Panc1 (cell line): ENCODE measurements at regions of chr5 and their contacts with region 1.

Region 1: DNA sequence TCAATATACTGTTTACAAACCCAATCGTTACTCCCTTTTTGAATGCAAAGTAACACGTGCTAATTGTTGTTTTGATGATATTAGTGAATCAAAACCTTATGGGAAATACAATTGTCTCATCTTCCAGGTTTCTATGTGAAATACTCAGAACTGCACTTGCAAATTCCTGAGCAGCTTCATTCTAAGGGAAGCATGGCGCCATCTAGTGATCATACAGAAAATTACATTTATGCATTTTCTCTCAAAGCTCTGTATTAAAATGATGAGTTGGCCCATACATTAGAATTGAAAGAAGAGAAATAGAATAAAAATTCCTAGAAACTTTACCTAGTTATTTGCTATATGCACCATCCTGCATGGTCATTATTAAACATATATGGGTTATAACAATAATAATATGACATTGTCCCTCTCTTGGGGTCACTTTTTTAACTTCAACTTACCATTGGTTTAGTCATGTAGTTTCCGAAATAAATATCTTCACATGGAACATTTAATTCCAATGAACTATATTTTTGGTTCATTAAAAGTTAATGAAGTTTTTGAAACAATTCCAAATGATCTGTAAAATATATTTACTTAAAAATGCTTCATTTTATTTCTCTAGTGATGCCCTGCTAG is 220.0 kb downstream of the PDE4D start:
- DNase-seq: no peak
- ATAC-seq: no peak
- H3K4me3 ChIP-seq: no peak overlapping the region
- H3K27ac ChIP-seq: no peak overlapping the region
- H3K4me1 ChIP-seq: no peaks in the 10 kb centered on the region
- H3K27me3 ChIP-seq: no peaks in the 10 kb centered on the region
- CTCF ChIP-seq: peak; percentile 77; the same call in 1 of the 2 replicates

Region 2: GRCh38 chr5:58834242-58835225 is 839.0 kb before region 1 on chr5:
- CTCF ChIA-PET with region 1: no interaction called
- POLR2A ChIA-PET with region 1: no interaction called
- in situ Hi-C with region 1: no loop called
- intact Hi-C with region 1: no loop called
- DNase-seq: no peak
- ATAC-seq: no peak
- H3K4me3 ChIP-seq: no peak overlapping the region
- H3K27ac ChIP-seq: no peak overlapping the region
- H3K4me1 ChIP-seq: no peaks in the 10 kb centered on the region
- H3K27me3 ChIP-seq: no peaks in the 10 kb centered on the region
- CTCF ChIP-seq: no peak

Region 3: GRCh38 chr5:59188419-59189225 is 484.9 kb before region 1 on chr5:
- CTCF ChIA-PET with region 1: no interaction called
- POLR2A ChIA-PET with region 1: no interaction called
- in situ Hi-C with region 1: no loop called
- intact Hi-C with region 1: loop called (anchors 5 kb)
- DNase-seq: no peak
- ATAC-seq: peak; percentile 87
- H3K4me3 ChIP-seq: no peak overlapping the region
- H3K27ac ChIP-seq: no peak overlapping the region
- H3K4me1 ChIP-seq: no peaks in the 10 kb centered on the region; the same call in 1 of the 2 replicates
- H3K27me3 ChIP-seq: peaks cover 4% of the 10 kb centered on the region; the same call in 1 of the 2 replicates
- CTCF ChIP-seq: peak; percentile 79

Region 4: DNA sequence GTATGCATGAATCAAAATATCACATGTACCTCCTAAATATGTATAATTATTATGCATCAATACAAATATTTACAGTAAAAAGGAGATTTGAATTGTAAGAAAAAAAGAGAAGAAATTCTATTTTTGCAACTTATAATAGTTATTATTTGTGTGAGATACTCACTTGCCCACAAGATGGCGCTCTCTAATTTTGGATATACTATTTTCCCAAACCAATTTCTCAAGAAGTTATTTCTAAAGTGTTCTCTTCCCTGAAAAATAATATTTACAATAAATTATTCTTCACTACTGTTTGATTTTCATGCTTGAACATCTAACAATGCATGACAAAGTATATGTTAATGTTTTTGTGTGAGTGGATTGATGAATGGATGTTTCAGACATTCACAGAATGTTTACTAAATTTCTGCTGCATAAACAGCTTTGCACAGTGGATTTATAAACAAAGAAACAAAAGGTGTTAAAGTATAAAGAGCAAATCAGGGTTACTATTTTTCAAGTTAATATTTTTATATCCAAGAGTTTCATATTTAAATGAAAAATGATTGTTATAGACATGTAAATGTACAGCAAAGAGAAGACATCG is 283.4 kb before region 1 on chr5:
- CTCF ChIA-PET with region 1: no interaction called
- POLR2A ChIA-PET with region 1: no interaction called
- in situ Hi-C with region 1: no loop called
- intact Hi-C with region 1: loop called (anchors 1 kb)
- DNase-seq: peak; percentile 4
- ATAC-seq: no peak
- H3K4me3 ChIP-seq: no peak overlapping the region
- H3K27ac ChIP-seq: no peak overlapping the region
- H3K4me1 ChIP-seq: no peaks in the 10 kb centered on the region
- H3K27me3 ChIP-seq: no peaks in the 10 kb centered on the region
- CTCF ChIP-seq: peak; percentile 52; the same call in 1 of the 2 replicates

Region 5: DNA sequence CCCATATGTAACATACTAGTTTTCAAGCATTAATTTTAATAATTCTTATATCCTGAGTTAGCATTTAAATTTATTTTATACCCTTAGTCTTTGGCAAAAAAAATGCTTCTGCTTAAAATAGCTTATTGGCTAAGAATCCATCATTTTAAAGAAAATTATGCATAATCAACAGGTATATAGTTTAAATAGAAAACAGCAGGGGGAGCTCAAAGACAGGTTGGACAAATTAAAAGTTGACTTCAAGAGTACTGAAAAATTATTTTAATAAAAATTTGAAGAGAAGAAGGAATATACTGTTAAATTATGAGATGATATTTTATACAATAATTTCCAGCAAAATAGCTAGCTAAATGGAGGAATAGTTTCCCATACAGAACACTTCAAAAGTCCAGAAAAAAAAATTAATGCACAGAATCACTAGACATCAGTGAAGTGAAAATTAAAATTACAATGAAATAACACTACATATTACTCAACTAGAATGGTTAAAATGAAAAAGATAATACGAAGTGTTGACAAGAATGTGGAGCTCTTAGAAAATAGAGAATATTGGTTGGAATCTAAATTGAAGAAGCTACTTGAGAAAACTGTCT is 167.2 kb before region 1 on chr5:
- CTCF ChIA-PET with region 1: interaction called, 14 read pairs
- POLR2A ChIA-PET with region 1: no interaction called
- in situ Hi-C with region 1: no loop called
- intact Hi-C with region 1: loop called (anchors 1 kb)
- DNase-seq: no peak
- ATAC-seq: no peak
- H3K4me3 ChIP-seq: no peak overlapping the region
- H3K27ac ChIP-seq: no peak overlapping the region
- H3K4me1 ChIP-seq: no peaks in the 10 kb centered on the region
- H3K27me3 ChIP-seq: no peaks in the 10 kb centered on the region
- CTCF ChIP-seq: peak; percentile 31; the same call in 1 of the 2 replicates

Region 6: DNA sequence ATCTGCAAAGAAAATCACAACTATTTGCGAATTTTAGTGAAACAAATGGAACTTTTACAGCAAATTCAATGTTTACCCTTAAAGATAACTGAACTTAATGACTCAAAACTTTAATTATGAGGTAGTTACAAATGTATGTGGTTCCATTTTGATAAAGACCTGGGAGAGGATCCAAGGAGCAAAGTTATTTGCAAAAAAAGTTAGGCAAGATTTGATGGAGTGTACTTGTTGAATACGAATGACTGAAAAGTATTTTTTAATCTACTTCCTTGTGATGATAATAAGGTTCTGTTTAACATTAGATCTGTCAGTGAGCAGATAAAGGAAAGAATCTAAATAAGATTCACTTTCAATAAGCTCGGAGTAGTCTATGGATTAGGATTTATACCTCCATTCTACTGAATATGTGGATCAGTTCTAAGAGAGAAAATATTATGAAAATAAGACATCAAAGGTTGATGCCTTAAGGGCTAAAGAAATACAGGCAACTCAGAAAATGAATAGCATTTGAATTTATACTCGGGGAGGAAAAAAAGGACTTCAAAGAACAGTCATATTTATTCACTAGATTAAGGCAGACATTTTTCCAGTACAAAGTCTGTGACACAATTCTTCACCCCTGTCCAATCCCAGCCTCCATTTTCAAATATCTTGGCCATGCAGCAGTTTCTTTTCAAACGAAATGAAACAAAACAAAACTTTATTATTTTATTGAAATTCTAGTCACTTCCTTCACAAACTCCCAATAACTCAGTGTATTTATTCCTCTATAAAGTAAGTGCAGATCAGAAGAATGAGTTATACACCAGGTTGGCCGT is 20.2 kb after region 1 on chr5:
- CTCF ChIA-PET with region 1: no interaction called
- POLR2A ChIA-PET with region 1: no interaction called
- in situ Hi-C with region 1: no loop called
- intact Hi-C with region 1: no loop called
- DNase-seq: no peak
- ATAC-seq: no peak
- H3K4me3 ChIP-seq: no peak overlapping the region
- H3K27ac ChIP-seq: no peak overlapping the region
- H3K4me1 ChIP-seq: no peaks in the 10 kb centered on the region
- H3K27me3 ChIP-seq: no peaks in the 10 kb centered on the region
- CTCF ChIP-seq: no peak

Region 7: GRCh38 chr5:59799668-59800346 is 126.3 kb after region 1 on chr5:
- CTCF ChIA-PET with region 1: interaction called, 9 read pairs
- POLR2A ChIA-PET with region 1: no interaction called
- in situ Hi-C with region 1: no loop called
- intact Hi-C with region 1: loop called (anchors 2 kb)
- DNase-seq: peak; percentile 59
- ATAC-seq: peak; percentile 82
- H3K4me3 ChIP-seq: peak overlapping the region in 1 of 2 experiments; percentile 21; a peak in 1 of 4 replicates
- H3K27ac ChIP-seq: no peak overlapping the region
- H3K4me1 ChIP-seq: no peaks in the 10 kb centered on the region
- H3K27me3 ChIP-seq: no peaks in the 10 kb centered on the region
- CTCF ChIP-seq: peak; percentile 66; the same call in 1 of the 2 replicates